ENCODE measurements at regions of chr2 and their contacts with region 1.

Region 1: GRCh38 chr2:74250189-74250631 is 51.8 kb downstream of the MTHFD2 start:
- DNase-seq: peak; percentile 23
- H3K4me3 Mint-ChIP-seq: no peak overlapping the region
- H3K27ac Mint-ChIP-seq: no peak overlapping the region
- H3K4me1 Mint-ChIP-seq: no peaks in the 10 kb centered on the region
- H3K27me3 Mint-ChIP-seq: peaks cover 7% of the 10 kb centered on the region

Region 2: GRCh38 chr2:73926493-73927338 is 323.5 kb before region 1 on chr2 and contains the start of gene DGUOK:
- intact Hi-C with region 1: no loop called
- DNase-seq: peak; percentile 97
- H3K4me3 Mint-ChIP-seq: peak within 1 kb of the TSS; percentile 91
- H3K27ac Mint-ChIP-seq: peak within 1 kb of the TSS; percentile 88
- H3K4me1 Mint-ChIP-seq: peaks cover 56% of the 10 kb centered on the region
- H3K27me3 Mint-ChIP-seq: no peaks in the 10 kb centered on the region
- total RNA-seq, gene DGUOK: 92.8 and 98.0 TPM in 2 replicates

Region 3: GRCh38 chr2:74334931-74335333 is 84.7 kb after region 1 on chr2:
- intact Hi-C with region 1: loop called (anchors 1 kb)
- DNase-seq: peak; percentile 57
- H3K4me3 Mint-ChIP-seq: no peak overlapping the region
- H3K27ac Mint-ChIP-seq: no peak overlapping the region
- H3K4me1 Mint-ChIP-seq: no peaks in the 10 kb centered on the region
- H3K27me3 Mint-ChIP-seq: peaks cover 2% of the 10 kb centered on the region

Region 4: DNA sequence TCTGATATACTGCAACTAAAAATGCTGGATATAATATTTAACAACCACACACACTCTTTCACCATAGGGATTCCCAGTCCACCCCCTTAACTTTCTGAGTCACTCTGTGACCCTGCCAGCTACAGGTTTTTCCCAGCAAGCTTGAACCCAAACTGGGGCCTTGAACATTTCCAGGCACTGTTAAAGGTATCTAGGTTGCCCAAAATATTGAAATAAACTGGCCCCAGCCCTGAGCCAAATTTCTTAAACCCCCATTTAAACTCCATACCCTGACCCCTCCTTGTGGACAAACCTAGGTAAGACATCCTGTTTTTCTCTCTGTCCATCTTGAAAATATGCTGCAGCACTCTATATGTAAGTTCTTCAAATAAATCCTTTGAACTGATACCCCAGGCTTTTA is 149.6 kb after region 1 on chr2:
- intact Hi-C with region 1: loop called (anchors 2 kb)
- DNase-seq: no peak
- H3K4me3 Mint-ChIP-seq: no peak overlapping the region
- H3K27ac Mint-ChIP-seq: no peak overlapping the region
- H3K4me1 Mint-ChIP-seq: peaks cover 9% of the 10 kb centered on the region
- H3K27me3 Mint-ChIP-seq: peaks cover 12% of the 10 kb centered on the region

Region 5: DNA sequence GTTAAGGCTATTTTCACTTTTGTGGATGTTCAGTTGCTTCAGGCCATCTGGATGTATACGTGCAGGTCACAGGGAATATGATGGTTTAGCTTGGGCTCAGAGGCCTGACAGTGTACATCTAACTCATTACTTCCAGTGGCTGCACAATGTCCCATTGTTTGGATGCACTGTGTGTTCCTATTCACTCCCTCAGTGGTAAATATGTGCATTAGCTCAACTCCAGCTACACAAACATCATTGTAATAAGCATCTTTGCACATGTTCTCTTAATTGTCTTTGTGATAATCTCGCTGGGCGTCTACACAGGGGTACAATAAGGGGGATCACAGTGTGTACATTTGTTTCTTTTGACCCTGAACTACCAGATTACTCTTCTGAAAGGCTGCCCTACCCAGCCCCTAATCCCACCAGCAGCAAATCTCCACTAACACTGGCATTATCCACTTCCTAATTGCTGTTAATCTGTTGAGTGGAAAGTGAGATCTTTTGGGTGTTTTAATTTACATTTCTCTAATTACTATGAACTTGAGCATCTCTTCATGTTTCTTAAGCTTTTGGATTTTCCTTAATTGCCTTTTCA is 652.2 kb after region 1 on chr2:
- intact Hi-C with region 1: no loop called
- DNase-seq: no peak
- H3K4me3 Mint-ChIP-seq: no peak overlapping the region
- H3K27ac Mint-ChIP-seq: no peak overlapping the region
- H3K4me1 Mint-ChIP-seq: no peaks in the 10 kb centered on the region
- H3K27me3 Mint-ChIP-seq: peaks cover 2% of the 10 kb centered on the region